Dorsolateral prefrontal cortex (tissue), 120 donors: ENCODE measurements at regions of chr14 and their contacts with region 1.

Region 1: DNA sequence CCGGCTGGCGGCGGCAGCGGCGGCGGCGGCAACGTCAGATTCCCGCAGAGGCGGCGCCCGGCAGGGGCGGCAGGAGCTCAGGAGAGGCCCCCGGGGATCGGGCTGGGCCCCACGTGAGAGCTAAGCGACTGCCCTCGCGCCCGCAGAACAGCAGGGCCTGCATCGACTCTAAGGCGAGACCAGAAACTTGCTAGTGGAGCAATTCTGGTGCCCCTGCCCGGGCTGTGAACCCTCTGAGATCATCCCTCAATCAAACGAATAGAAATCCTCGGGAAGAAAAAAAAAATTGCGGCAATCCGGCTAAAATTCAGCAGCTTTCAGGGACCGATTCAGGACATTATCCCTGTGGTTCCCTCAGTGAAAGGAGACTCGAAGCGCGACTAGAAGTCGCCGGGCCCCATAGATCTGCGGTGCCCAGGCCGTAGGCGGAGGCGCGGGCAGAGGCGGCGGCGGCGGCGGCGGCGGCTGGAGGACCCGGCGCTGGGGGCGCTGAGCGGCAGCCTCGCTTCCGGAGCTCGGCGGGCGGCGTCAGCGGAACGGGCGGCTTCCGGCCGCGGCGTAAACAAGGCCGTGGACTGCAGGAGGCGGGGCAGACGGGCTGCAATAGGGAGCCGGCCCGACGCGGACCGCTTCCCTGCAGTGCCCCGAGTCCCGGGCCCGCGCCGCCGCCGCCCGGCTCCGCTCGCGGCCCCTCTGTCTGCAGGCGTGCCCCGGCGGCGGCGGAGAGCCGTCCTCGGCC is at the start of gene KLHDC2:
- DNase-seq: peak; percentile 66 to 94 (median 85)
- H3K4me3 ChIP-seq: peak within 1 kb of the TSS; percentile 58 to 99 (median 94)
- H3K27ac ChIP-seq: peak within 1 kb of the TSS; percentile 91 to 100 (median 99)
- H3K27me3 ChIP-seq: no peaks in the 10 kb centered on the region
- CTCF ChIP-seq: peak in 49 of 56 donors; percentile 13 to 77 (median 51)
- total RNA-seq, gene KLHDC2: 43.9 to 114 (median 79.6) TPM

Region 2: GRCh38 chr14:49692811-49693734 is 74.7 kb before region 1 on chr14 and contains the start of gene KLHDC1:
- intact Hi-C with region 1: loop called (anchors 2 kb)
- DNase-seq: peak; percentile 71 to 93 (median 86)
- H3K4me3 ChIP-seq: peak within 1 kb of the TSS; percentile 49 to 94 (median 78)
- H3K27ac ChIP-seq: peak within 1 kb of the TSS; percentile 74 to 99 (median 93)
- H3K27me3 ChIP-seq: no peaks in the 10 kb centered on the region
- CTCF ChIP-seq: peak in 25 of 56 donors; percentile 9 to 41 (median 26)
- total RNA-seq, gene KLHDC1: 14.3 to 47.1 (median 25.4) TPM

Region 3: DNA sequence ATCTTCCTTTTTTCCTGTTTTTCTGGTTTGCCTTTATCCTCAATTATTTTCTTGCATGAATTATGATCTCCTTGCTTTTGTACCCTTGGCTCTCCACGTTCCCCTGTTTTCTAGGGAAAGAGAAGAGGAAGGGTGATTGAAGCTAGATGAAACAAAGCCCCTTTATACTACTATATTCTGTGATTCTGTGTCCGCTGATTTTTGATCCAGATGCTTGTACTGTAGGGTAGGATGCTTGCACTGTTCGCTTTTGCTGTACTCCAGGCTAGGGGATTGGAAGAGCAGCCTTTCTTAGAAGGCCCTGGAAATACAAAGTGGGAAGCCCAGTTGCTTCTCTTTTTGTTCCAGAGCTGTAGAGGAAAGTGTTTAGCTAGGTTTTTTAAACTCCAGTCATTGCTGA is 34.8 kb before region 1 on chr14:
- intact Hi-C with region 1: loop called in 1 of 2 experiments (anchors 5 kb)
- DNase-seq: no peak
- H3K4me3 ChIP-seq: peak overlapping the region in 7 of 59 donors; percentile 5 to 41 (median 19)
- H3K27ac ChIP-seq: peak overlapping the region in 50 of 59 donors; percentile 2 to 89 (median 62)
- H3K27me3 ChIP-seq: no peaks in the 10 kb centered on the region
- CTCF ChIP-seq: no peak

Region 4: GRCh38 chr14:49852301-49853157 is 84.8 kb after region 1 on chr14 and contains the start of gene NEMF:
- intact Hi-C with region 1: loop called in 1 of 2 experiments (anchors 5 kb)
- DNase-seq: peak; percentile 72 to 91 (median 84)
- H3K4me3 ChIP-seq: peak within 1 kb of the TSS; percentile 71 to 100 (median 91)
- H3K27ac ChIP-seq: peak within 1 kb of the TSS; percentile 70 to 96 (median 91)
- H3K27me3 ChIP-seq: no peaks in the 10 kb centered on the region
- CTCF ChIP-seq: peak; percentile 75 to 98 (median 90)
- total RNA-seq, gene NEMF: 91.8 to 161 (median 124) TPM

Region 5: DNA sequence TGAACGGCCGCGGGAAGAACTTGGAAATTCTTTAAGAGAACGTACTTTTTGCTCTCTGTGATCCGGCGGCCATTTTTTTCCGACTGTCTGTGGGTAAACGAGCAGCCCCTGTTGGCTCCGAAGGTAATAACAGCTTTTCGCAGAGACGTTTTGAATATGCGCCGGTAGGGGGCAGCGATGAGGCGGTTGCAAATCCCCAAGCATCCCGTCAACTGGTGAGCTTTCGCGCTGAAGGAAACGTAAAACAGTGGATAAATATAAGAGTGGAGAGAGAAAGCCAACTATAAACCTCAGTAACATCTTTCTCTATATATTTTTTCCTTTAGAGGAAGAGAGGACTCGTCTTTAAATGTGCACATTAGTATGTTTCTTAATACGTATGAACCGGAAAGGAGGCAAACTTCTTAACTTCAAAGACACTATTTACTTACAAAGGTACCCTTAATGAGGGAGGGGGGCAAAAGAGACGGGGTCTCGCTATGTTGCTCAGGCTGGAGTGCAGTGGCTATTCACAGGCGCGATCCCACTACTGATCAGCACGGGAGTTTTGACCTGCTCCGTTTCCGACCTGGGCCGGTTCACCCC is 94.5 kb after region 1 on chr14:
- intact Hi-C with region 1: loop called in 1 of 2 experiments (anchors 5 kb)
- DNase-seq: peak; percentile 63 to 86 (median 78)
- H3K4me3 ChIP-seq: peak overlapping the region; percentile 40 to 95 (median 77)
- H3K27ac ChIP-seq: peak overlapping the region; percentile 81 to 100 (median 98)
- H3K27me3 ChIP-seq: no peaks in the 10 kb centered on the region
- CTCF ChIP-seq: peak; percentile 87 to 100 (median 99)